Activated CD4-positive, alpha-beta T cell treated with anti-CD3 and anti-CD28 coated beads for 36 hours (primary cell): ENCODE measurements at regions of chr17 and their contacts with region 1.

Region 1: DNA sequence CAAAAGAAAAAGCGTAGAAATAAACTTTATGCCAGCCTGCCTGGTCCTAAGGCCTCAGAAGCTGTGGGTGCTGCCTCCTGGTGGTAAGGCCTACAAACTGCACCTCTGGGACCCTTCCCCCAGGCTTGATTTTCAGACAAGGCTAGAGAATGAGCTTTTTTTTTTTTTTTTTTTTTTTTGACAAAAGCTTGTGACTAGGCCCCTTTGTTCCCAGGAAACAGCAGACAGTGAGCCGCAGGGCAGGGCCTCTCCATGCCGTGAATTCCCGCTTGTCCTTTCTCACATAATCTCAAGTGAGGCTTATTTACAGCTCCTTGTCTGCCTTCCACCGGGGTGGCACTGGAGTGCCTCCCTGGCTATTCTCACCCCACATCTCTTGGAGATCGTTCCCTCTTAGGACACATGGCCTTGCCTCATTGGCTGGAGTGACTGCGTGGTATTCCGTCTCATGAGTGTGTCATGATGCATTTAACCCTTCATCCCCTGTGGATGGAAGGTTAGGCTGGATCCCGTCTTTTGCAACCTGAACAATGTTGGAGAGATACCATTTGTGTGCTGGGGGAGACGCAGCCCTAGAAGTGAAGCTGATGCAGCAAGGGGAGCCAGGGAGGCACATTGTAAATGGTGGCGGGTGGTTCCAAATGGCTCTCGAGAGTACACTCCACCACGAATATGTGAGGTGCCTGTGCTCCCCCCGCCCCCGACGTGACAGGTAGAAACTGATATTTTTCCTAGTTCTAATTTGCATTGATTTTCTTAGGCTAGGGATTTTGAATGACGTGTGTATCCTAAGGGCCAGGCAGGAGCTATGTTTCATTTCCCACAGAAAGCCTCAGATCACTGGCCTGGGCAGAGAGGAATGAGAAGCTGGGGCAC is 49.6 kb downstream of the USP22 start:
- DNase-seq: peak; percentile 82
- ATAC-seq: peak; percentile 81
- H3K4me3 Mint-ChIP-seq: no peak overlapping the region
- H3K27ac Mint-ChIP-seq: no peak overlapping the region
- H3K4me1 Mint-ChIP-seq: peaks cover 2% of the 10 kb centered on the region
- H3K27me3 Mint-ChIP-seq: no peaks in the 10 kb centered on the region

Region 2: DNA sequence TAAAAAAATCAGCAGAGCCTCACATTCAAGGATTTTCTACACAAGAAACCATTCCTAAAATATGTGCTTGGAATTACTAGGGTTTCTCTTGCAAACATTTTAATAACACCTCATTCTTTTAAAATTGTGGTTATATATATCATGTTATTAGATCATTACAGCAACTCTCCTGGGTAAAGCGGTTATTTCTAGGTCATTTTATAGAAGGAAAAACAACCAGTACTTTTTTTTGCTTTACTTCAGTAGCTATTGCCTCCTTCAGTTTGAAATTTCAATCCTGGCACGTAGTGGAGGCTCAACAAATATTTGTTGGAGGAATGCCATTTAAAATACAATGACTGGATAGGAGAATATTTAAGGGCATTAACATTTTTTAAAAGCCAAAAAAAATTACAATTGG is 193.1 kb before region 1 on chr17:
- CTCF ChIA-PET with region 1: interaction called, 5 read pairs
- POLR2A ChIA-PET with region 1: no interaction called
- intact Hi-C with region 1: loop called (anchors 1 to 2 kb)
- DNase-seq: no peak
- ATAC-seq: no peak
- H3K4me3 Mint-ChIP-seq: no peak overlapping the region
- H3K27ac Mint-ChIP-seq: no peak overlapping the region
- H3K4me1 Mint-ChIP-seq: peaks cover 10% of the 10 kb centered on the region
- H3K27me3 Mint-ChIP-seq: no peaks in the 10 kb centered on the region

Region 3: GRCh38 chr17:20908373-20909273 is 84.6 kb before region 1 on chr17:
- CTCF ChIA-PET with region 1: no interaction called
- POLR2A ChIA-PET with region 1: no interaction called
- intact Hi-C with region 1: loop called (anchors 1 to 10 kb)
- DNase-seq: peak; percentile 90
- ATAC-seq: peak; percentile 100
- H3K4me3 Mint-ChIP-seq: peak overlapping the region; percentile 65
- H3K27ac Mint-ChIP-seq: peak overlapping the region; percentile 76
- H3K4me1 Mint-ChIP-seq: peaks cover 3% of the 10 kb centered on the region
- H3K27me3 Mint-ChIP-seq: peaks cover 7% of the 10 kb centered on the region

Region 4: DNA sequence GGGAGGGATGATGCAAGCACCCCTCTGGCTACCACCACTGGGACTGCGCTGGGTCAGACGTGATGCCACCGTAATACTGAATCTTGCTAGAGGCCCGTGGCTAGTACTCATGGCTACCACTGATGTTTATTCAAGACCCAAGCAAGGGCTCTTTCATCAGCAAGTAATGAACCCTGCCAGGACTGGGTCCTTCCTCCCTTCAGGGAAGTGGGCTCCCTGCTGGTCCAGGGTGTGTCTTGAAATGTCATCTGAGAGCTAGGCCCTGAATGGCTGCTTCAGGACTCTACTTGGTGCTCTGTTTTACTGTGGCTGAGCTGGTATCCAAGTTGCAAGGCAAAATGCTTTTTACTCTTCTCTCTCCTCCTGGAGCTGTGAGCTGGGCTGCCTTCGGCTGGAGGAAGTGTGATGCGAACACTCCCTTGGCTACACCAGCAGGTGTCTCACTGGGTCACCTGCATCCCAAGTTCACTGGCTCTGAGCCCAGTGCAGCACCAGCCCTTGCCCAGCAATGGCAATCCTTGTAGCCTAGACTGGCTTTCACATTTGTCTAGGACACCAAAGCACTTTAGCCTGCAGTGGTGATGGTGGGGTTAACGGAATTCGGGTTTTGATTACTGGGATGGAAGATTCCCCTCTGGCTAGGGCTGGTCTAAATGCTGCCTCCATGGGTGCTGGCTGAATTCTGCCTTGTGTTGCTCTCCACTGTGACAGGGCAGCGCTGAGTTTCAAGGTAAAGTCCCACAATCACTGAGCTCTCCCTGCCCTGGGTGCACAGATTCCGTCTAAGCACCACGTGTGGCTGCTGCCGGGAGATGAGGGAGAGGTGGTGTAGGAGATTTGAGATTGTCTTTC is 49.0 kb before region 1 on chr17:
- CTCF ChIA-PET with region 1: interaction called, 9 read pairs
- POLR2A ChIA-PET with region 1: no interaction called
- intact Hi-C with region 1: loop called in 1 of 2 experiments (anchors 1 kb)
- DNase-seq: peak; percentile 60
- ATAC-seq: peak; percentile 74
- H3K4me3 Mint-ChIP-seq: no peak overlapping the region
- H3K27ac Mint-ChIP-seq: no peak overlapping the region
- H3K4me1 Mint-ChIP-seq: peaks cover 5% of the 10 kb centered on the region
- H3K27me3 Mint-ChIP-seq: peaks cover 12% of the 10 kb centered on the region